Dendritic cell treated with granulocyte-macrophage colony-stimulating factor and Interleukin-4, amounts not matched to agents 40 ng/mL and 50 ng/mL, for 4 days (primary cell): ENCODE measurements at regions of chr1 and their contacts with region 1.

Region 1: DNA sequence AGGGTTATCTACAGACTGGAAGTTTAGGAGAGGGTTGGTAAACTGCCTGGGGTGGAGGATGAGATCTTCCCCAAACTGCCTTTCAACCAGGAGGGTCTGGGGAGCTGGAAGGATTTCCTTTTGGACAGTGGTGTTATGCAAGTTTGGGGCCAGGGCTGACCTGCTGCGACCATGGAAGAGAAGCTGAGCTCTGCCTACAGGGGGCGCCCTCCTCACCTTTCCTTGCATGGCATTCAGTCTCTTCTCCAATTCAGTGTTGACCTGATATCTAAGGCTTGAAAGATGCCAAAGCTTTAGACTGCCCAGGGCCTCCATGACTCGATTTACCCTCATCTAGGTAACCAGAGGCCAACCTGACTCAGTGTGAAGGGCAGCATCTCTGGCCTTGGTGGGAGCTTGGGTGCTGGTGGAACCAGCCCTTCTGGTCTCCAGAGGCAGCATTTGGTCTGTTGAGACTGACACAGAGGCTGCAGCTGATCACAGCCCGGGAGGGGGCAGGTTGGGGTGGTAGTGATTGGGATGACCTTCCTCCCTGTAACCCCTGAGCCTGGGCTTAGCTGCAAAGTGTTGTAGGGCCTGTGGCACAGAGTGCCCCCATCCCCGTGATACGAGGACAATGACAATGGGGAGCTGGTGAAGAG is 170.0 kb downstream of the GRIK3 start:
- H3K4me3 Mint-ChIP-seq: no peak overlapping the region
- H3K27ac Mint-ChIP-seq: no peak overlapping the region
- H3K4me1 Mint-ChIP-seq: no peaks in the 10 kb centered on the region
- H3K27me3 Mint-ChIP-seq: peaks cover 3% of the 10 kb centered on the region

Region 2: GRCh38 chr1:37434292-37434907 is 570.1 kb after region 1 on chr1:
- intact Hi-C with region 1: loop called (anchors 10 kb)
- H3K4me3 Mint-ChIP-seq: no peak overlapping the region
- H3K27ac Mint-ChIP-seq: no peak overlapping the region
- H3K4me1 Mint-ChIP-seq: peaks cover 12% of the 10 kb centered on the region
- H3K27me3 Mint-ChIP-seq: peaks cover 35% of the 10 kb centered on the region